ENCODE measurements at regions of chr17 and their contacts with region 1.

Region 1: GRCh38 chr17:68771867-68772515 is 170.8 kb upstream of the FAM20A start:
- DNase-seq: peak; percentile 54 to 74
- ATAC-seq: peak; percentile 80 to 85
- H3K4me3 ChIP-seq: no peak overlapping the region
- H3K27ac ChIP-seq: no peak overlapping the region
- H3K4me1 ChIP-seq: peaks cover 7% of the 10 kb centered on the region
- CTCF ChIP-seq: peak; percentile 77
- EP300 ChIP-seq: no peak
- POLR2A ChIP-seq: no peak
- RAD21 ChIP-seq: peak; percentile 75 to 76

Region 2: DNA sequence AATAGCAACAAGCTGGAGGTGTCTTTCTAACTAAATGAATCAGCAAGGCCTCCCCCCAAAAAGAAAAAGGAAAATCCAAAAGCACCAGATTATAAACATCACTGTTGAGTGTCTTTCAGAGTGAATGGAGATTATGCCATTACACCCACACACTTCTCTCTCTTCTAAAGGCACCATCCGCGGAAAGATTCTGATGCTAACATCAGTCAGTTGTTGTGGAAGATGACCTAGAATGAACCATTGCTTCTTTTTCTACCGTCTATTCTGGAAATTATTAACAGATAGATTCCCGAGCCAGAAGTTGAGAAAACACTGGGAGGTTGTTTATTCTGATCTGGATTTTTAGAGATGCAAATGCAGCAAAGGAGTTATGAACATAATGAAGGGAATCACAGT is 110.0 kb before region 1 on chr17:
- CTCF ChIA-PET with region 1: no interaction called
- POLR2A ChIA-PET with region 1: no interaction called
- DNase-seq: no peak
- ATAC-seq: no peak
- H3K4me3 ChIP-seq: no peak overlapping the region
- H3K27ac ChIP-seq: no peak overlapping the region
- H3K4me1 ChIP-seq: no peaks in the 10 kb centered on the region
- CTCF ChIP-seq: no peak
- EP300 ChIP-seq: no peak
- POLR2A ChIP-seq: no peak
- RAD21 ChIP-seq: no peak

Region 3: DNA sequence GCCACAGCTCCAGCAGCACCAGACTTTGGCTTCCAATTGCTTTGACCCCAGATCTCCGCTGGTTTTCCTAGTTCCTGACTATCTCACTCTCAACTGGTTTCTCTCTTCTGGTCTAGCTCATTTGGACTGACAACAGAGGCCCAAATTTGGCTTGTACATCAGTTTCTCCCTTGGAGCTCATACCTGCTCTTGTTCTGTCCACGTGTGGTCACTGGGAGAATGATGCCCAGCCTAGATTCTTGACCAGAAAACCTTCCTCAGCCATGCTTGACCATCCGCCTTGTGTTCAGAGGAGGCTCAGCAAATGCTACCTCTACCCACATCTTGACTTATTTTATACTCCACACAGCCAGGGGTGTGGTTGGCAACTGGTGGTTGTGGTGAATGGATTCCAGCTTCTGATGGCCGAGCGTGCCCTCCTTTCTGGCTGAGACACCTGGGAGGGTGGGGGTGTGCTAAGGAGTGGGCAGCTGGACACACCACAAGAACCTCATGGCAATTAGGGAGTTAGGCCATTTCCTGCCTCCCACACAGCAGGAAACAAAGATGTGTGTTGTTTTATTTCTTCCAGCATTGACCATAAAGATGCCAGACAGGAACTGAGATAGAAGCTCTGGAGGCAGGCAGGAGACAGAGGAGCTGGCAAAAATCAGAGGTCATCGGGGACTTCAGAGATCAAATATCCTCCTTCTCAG is 77.1 kb before region 1 on chr17:
- CTCF ChIA-PET with region 1: no interaction called
- POLR2A ChIA-PET with region 1: no interaction called
- DNase-seq: no peak
- ATAC-seq: no peak
- H3K4me3 ChIP-seq: no peak overlapping the region
- H3K27ac ChIP-seq: no peak overlapping the region
- H3K4me1 ChIP-seq: peaks cover 7% of the 10 kb centered on the region; the same call in 1 of the 3 replicates
- CTCF ChIP-seq: no peak
- EP300 ChIP-seq: no peak
- POLR2A ChIP-seq: no peak
- RAD21 ChIP-seq: no peak

Region 4: DNA sequence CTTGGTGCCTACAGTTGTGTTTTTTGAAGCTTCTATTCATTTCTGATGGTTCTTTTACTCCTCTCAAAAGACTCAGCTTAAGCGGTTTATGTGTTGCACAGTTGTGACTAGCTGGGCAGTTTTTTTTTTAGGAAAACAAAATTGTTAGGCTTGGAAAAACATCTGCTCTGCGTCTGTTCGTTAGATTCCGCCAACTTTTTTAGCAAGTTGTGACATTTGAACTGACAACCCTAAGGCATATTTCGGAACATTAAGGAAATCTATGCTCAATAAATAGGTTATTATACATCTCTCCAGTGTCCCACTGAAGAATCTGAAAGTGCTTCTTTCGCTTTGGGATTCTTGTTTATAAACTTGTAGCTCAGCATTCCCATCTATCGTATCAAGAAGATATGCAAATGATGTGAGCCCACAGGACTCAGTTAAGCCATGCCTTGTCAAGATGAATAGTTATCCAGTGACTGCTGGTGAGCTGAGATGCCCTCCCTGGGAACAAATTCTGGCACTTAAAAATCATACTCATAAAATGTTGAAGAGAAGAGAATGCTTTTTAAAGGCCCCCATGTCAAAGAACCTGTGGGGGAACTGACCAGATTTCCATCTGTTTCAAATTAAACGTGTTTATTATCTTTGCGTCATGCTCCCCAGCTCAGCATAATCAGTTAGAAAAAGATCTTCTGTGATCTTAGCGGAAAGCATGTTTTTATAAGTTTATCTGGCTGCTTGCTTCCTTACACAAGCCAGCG is 61.8 kb before region 1 on chr17:
- CTCF ChIA-PET with region 1: no interaction called
- POLR2A ChIA-PET with region 1: no interaction called
- DNase-seq: no peak
- ATAC-seq: no peak
- H3K4me3 ChIP-seq: no peak overlapping the region
- H3K27ac ChIP-seq: no peak overlapping the region
- H3K4me1 ChIP-seq: no peaks in the 10 kb centered on the region
- CTCF ChIP-seq: no peak
- EP300 ChIP-seq: no peak
- POLR2A ChIP-seq: no peak
- RAD21 ChIP-seq: no peak

Region 5: GRCh38 chr17:68734931-68735330 is 37.1 kb before region 1 on chr17:
- CTCF ChIA-PET with region 1: no interaction called
- POLR2A ChIA-PET with region 1: no interaction called
- DNase-seq: no peak
- ATAC-seq: no peak
- H3K4me3 ChIP-seq: no peak overlapping the region
- H3K27ac ChIP-seq: no peak overlapping the region
- H3K4me1 ChIP-seq: no peaks in the 10 kb centered on the region
- CTCF ChIP-seq: no peak
- EP300 ChIP-seq: no peak
- POLR2A ChIP-seq: no peak
- RAD21 ChIP-seq: no peak

Region 6: GRCh38 chr17:68759343-68760132 is 12.5 kb before region 1 on chr17:
- CTCF ChIA-PET with region 1: interaction called, 27 read pairs
- POLR2A ChIA-PET with region 1: no interaction called
- DNase-seq: peak; percentile 95
- ATAC-seq: peak; percentile 98
- H3K4me3 ChIP-seq: peak overlapping the region; percentile 45
- H3K27ac ChIP-seq: peak overlapping the region; percentile 92 to 95
- H3K4me1 ChIP-seq: peaks cover 10% of the 10 kb centered on the region
- CTCF ChIP-seq: peak; percentile 97
- EP300 ChIP-seq: no peak
- POLR2A ChIP-seq: peak; percentile 77
- RAD21 ChIP-seq: peak; percentile 98 to 99

Region 7: DNA sequence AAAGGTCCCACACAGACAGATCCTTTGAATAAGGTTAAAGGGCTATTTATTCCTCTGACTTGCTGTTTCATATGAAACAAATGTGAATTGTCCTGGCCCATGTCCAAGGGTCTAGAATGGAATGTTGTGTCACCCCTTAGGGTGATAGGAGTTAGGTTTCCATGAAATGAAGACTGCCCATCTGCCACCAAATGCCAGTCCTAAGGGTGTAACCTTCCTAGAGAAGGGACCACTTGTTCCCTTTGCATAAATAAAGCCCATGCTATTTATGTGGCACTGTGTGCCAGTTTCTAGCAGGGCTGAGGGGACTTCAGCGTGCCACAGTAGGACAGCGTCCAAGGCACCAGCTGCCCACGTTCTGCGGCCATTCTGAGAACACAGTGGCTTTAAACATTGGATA is 11.9 kb after region 1 on chr17:
- CTCF ChIA-PET with region 1: interaction called, 128 read pairs
- POLR2A ChIA-PET with region 1: no interaction called
- DNase-seq: no peak
- ATAC-seq: no peak
- H3K4me3 ChIP-seq: no peak overlapping the region
- H3K27ac ChIP-seq: no peak overlapping the region
- H3K4me1 ChIP-seq: no peaks in the 10 kb centered on the region
- CTCF ChIP-seq: no peak
- EP300 ChIP-seq: no peak
- POLR2A ChIP-seq: no peak
- RAD21 ChIP-seq: no peak

Region 8: GRCh38 chr17:68972119-68972704 is 200.2 kb after region 1 on chr17:
- CTCF ChIA-PET with region 1: interaction called, 43 read pairs
- POLR2A ChIA-PET with region 1: no interaction called
- DNase-seq: peak; percentile 20 to 49
- ATAC-seq: peak; percentile 55 to 59; a peak in 4 of 6 replicates
- H3K4me3 ChIP-seq: no peak overlapping the region
- H3K27ac ChIP-seq: no peak overlapping the region
- H3K4me1 ChIP-seq: no peaks in the 10 kb centered on the region
- CTCF ChIP-seq: peak; percentile 83
- EP300 ChIP-seq: no peak
- POLR2A ChIP-seq: no peak
- RAD21 ChIP-seq: peak; percentile 65 to 82

Region 9: DNA sequence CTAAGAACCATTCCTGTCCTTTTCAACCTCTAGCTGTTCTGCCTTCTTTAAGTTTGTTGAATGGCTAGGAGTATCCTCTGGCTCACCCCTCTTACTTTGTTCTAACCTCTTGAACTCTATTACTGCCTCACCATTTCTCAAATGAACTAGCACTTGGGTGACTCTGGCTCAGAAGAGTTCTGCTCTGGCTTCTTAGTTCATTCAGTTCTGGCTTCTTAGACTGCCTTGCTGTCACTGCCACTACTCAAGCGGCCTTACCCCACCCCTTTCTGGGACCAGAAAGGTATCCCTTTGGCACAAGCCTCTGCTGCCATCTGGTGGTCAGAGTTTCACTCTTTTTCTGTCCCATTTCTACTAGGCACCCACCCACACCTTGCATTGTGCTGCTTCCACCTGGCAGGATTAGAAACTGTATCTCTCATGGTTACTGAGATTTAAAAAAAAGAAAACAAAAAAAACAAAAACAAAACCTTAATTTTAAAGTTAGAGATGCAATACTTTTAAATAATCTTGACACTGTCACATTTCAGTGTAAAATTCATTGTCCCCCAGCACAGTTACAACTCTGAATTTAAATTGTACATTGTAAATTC is 463.4 kb after region 1 on chr17:
- CTCF ChIA-PET with region 1: interaction called, 352 read pairs
- POLR2A ChIA-PET with region 1: no interaction called
- DNase-seq: peak; percentile 59 to 83
- ATAC-seq: peak; percentile 99
- H3K4me3 ChIP-seq: no peak overlapping the region
- H3K27ac ChIP-seq: no peak overlapping the region
- H3K4me1 ChIP-seq: no peaks in the 10 kb centered on the region
- CTCF ChIP-seq: peak; percentile 98
- EP300 ChIP-seq: no peak
- POLR2A ChIP-seq: no peak
- RAD21 ChIP-seq: peak; percentile 96 to 97

Region 10: GRCh38 chr17:69246726-69247375 is 474.9 kb after region 1 on chr17:
- CTCF ChIA-PET with region 1: interaction called, 352 read pairs
- POLR2A ChIA-PET with region 1: no interaction called
- DNase-seq: peak; percentile 31 to 55
- ATAC-seq: peak; percentile 47 to 85; a peak in 4 of 6 replicates
- H3K4me3 ChIP-seq: no peak overlapping the region
- H3K27ac ChIP-seq: no peak overlapping the region
- H3K4me1 ChIP-seq: peaks cover 7% of the 10 kb centered on the region; the same call in 1 of the 3 replicates
- CTCF ChIP-seq: peak; percentile 92
- EP300 ChIP-seq: no peak
- POLR2A ChIP-seq: no peak
- RAD21 ChIP-seq: peak; percentile 82 to 86

Measured in A549 (cell line).